CD4-positive, alpha-beta T cell (primary cell): ENCODE measurements at regions of chr7 and their contacts with region 1.

Region 1: GRCh38 chr7:129468087-129468486 is 33.9 kb downstream of the STRIP2 start:
- DNase-seq: no peak
- ATAC-seq: no peak
- H3K4me3 ChIP-seq: no peak overlapping the region
- H3K4me3 Mint-ChIP-seq: no peak overlapping the region
- H3K27ac ChIP-seq: no peak overlapping the region
- H3K27ac Mint-ChIP-seq: no peak overlapping the region
- H3K4me1 ChIP-seq: no peaks in the 10 kb centered on the region
- H3K4me1 Mint-ChIP-seq: no peaks in the 10 kb centered on the region
- H3K27me3 ChIP-seq: no peaks in the 10 kb centered on the region
- H3K27me3 Mint-ChIP-seq: no peaks in the 10 kb centered on the region
- CTCF ChIP-seq: no peak

Region 2: DNA sequence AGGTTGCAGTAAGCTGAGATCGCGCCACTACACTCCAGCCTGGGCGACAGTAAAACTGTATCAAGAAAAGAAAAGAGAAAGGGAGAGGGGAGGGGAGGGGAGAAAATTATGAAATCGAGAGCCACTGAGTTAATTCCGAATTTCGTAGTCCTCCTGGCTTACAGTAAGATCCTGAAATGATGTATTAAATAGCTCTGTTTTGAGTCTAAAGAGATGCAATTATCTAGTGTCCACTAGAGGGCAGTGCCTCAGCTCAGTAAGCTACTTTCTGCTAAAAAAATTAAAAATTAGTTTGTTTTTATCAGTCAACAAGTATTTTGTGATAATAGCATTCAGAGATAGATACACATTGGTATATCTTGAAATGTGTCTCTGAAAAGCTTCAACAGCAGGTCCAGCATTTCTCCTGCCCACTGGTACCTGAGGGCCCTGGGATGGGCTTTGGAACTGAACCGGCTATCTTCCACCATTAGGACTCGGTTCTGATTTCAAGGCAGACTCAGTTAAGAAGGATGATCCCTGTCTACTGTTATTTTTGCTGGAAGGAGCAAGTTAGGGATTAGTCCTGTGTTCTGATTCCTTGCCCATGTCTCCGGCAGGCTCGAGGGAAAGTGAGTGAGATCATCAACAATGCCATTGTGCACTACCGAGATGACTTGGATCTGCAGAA is 304.1 kb before region 1 on chr7:
- CTCF ChIA-PET with region 1: no interaction called
- POLR2A ChIA-PET with region 1: no interaction called
- intact Hi-C with region 1: loop called in 1 of 2 experiments (anchors 5 kb)
- DNase-seq: peak in 4 of 14 experiments; percentile 21 to 70 (median 54)
- ATAC-seq: peak; percentile 65
- H3K4me3 ChIP-seq: no peak overlapping the region
- H3K4me3 Mint-ChIP-seq: no peak overlapping the region
- H3K27ac ChIP-seq: no peak overlapping the region
- H3K27ac Mint-ChIP-seq: no peak overlapping the region
- H3K4me1 ChIP-seq: peaks cover 4% of the 10 kb centered on the region
- H3K4me1 Mint-ChIP-seq: peaks cover 6% of the 10 kb centered on the region
- H3K27me3 ChIP-seq: no peaks in the 10 kb centered on the region
- H3K27me3 Mint-ChIP-seq: peaks cover 7% of the 10 kb centered on the region
- CTCF ChIP-seq: peak; percentile 88

Region 3: GRCh38 chr7:129218514-129219062 is 249.5 kb before region 1 on chr7:
- CTCF ChIA-PET with region 1: interaction called, 6 read pairs
- POLR2A ChIA-PET with region 1: no interaction called
- intact Hi-C with region 1: loop called (anchors 1 kb)
- DNase-seq: peak; percentile 65 to 88 (median 72)
- ATAC-seq: peak; percentile 84
- H3K4me3 ChIP-seq: no peak overlapping the region
- H3K4me3 Mint-ChIP-seq: no peak overlapping the region
- H3K27ac ChIP-seq: no peak overlapping the region
- H3K27ac Mint-ChIP-seq: no peak overlapping the region
- H3K4me1 ChIP-seq: peaks cover 20% of the 10 kb centered on the region
- H3K4me1 Mint-ChIP-seq: peaks cover 16% of the 10 kb centered on the region
- H3K27me3 ChIP-seq: no peaks in the 10 kb centered on the region
- H3K27me3 Mint-ChIP-seq: no peaks in the 10 kb centered on the region
- CTCF ChIP-seq: peak; percentile 88

Region 4: GRCh38 chr7:129343099-129343700 is 124.9 kb before region 1 on chr7:
- CTCF ChIA-PET with region 1: interaction called, 3 read pairs
- POLR2A ChIA-PET with region 1: no interaction called
- intact Hi-C with region 1: loop called (anchors 1 to 2 kb)
- DNase-seq: peak in 4 of 14 experiments; percentile 12 to 61 (median 55)
- ATAC-seq: no peak
- H3K4me3 ChIP-seq: no peak overlapping the region
- H3K4me3 Mint-ChIP-seq: no peak overlapping the region
- H3K27ac ChIP-seq: no peak overlapping the region
- H3K27ac Mint-ChIP-seq: no peak overlapping the region
- H3K4me1 ChIP-seq: no peaks in the 10 kb centered on the region
- H3K4me1 Mint-ChIP-seq: peaks cover 15% of the 10 kb centered on the region
- H3K27me3 ChIP-seq: no peaks in the 10 kb centered on the region
- H3K27me3 Mint-ChIP-seq: no peaks in the 10 kb centered on the region
- CTCF ChIP-seq: peak; percentile 80

Region 5: DNA sequence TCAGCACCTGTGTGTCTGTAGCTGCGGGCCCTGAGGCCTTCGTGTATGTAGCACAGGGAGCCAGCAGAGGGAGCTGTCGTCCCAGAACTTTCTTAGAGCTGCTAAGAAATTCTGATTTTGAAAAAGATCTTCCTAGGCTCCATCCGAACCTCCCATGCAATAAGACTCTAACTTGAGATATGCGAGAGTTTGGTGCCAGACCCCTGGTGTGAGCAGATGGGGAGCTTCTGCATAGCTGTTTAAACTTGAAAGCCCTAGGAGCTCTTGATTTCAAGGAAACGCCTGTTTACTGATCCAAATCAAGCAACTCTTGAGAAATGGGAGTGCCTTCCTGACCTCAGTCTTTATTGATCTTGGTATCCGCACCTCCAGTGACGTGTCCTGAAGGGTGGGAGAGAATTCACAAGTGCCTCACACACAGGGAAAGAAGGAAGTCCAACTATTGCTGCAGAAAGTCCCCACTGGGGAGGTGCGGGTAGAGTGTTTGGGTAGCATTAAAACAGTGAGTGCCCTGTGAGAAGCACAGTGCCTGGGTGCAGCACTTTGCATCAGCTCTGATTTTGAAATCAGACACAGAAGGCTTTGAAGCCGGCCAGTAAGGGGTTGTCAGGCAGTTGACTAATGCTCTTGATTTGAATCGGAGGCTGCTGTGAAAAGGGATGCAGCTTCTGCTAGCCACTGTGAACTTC is 100.2 kb before region 1 on chr7:
- CTCF ChIA-PET with region 1: interaction called, 13 read pairs
- POLR2A ChIA-PET with region 1: interaction called, 3 read pairs
- intact Hi-C with region 1: loop called (anchors 1 kb)
- DNase-seq: peak; percentile 51 to 84 (median 65)
- ATAC-seq: peak; percentile 85
- H3K4me3 ChIP-seq: peak overlapping the region; percentile 24
- H3K4me3 Mint-ChIP-seq: peak overlapping the region; percentile 9
- H3K27ac ChIP-seq: no peak overlapping the region
- H3K27ac Mint-ChIP-seq: no peak overlapping the region
- H3K4me1 ChIP-seq: peaks cover 15% of the 10 kb centered on the region
- H3K4me1 Mint-ChIP-seq: peaks cover 15% of the 10 kb centered on the region
- H3K27me3 ChIP-seq: no peaks in the 10 kb centered on the region
- H3K27me3 Mint-ChIP-seq: no peaks in the 10 kb centered on the region
- CTCF ChIP-seq: peak; percentile 78

Region 6: GRCh38 chr7:129719980-129720732 is 252.1 kb after region 1 on chr7:
- CTCF ChIA-PET with region 1: no interaction called
- POLR2A ChIA-PET with region 1: no interaction called
- intact Hi-C with region 1: no loop called
- DNase-seq: no peak
- ATAC-seq: no peak
- H3K4me3 ChIP-seq: no peak overlapping the region
- H3K4me3 Mint-ChIP-seq: no peak overlapping the region
- H3K27ac ChIP-seq: no peak overlapping the region
- H3K27ac Mint-ChIP-seq: no peak overlapping the region
- H3K4me1 ChIP-seq: no peaks in the 10 kb centered on the region
- H3K4me1 Mint-ChIP-seq: no peaks in the 10 kb centered on the region
- H3K27me3 ChIP-seq: no peaks in the 10 kb centered on the region
- H3K27me3 Mint-ChIP-seq: no peaks in the 10 kb centered on the region
- CTCF ChIP-seq: no peak